ENCODE measurements at regions of chr15 and their contacts with region 1.

Region 1: GRCh38 chr15:94324117-94324826 is 92.9 kb downstream of the MCTP2 start:
- DNase-seq: peak in 1 of 2 donors; percentile 55
- ATAC-seq: peak; percentile 91
- H3K4me3 ChIP-seq: no peak overlapping the region
- H3K27ac ChIP-seq: no peak overlapping the region
- H3K4me1 ChIP-seq: no peaks in the 10 kb centered on the region
- H3K27me3 ChIP-seq: no peaks in the 10 kb centered on the region

Region 2: GRCh38 chr15:94163999-94164807 is 160.1 kb before region 1 on chr15:
- intact Hi-C with region 1: loop called in 1 of 2 experiments (anchors 2 kb)
- DNase-seq: no peak
- ATAC-seq: peak; percentile 71
- H3K4me3 ChIP-seq: no peak overlapping the region
- H3K27ac ChIP-seq: no peak overlapping the region
- H3K4me1 ChIP-seq: no peaks in the 10 kb centered on the region
- H3K27me3 ChIP-seq: no peaks in the 10 kb centered on the region

Region 3: GRCh38 chr15:94467034-94467433 is 142.8 kb after region 1 on chr15:
- intact Hi-C with region 1: no loop called
- DNase-seq: no peak
- ATAC-seq: no peak
- H3K4me3 ChIP-seq: no peak overlapping the region
- H3K27ac ChIP-seq: no peak overlapping the region
- H3K4me1 ChIP-seq: no peaks in the 10 kb centered on the region
- H3K27me3 ChIP-seq: no peaks in the 10 kb centered on the region